Posterior cingulate gyrus (tissue), 11 donors: ENCODE measurements at regions of chr9 and their contacts with region 1.

Region 1: GRCh38 chr9:116646661-116647512 is 40.2 kb upstream of the TRIM32 start:
- DNase-seq: no peak

Region 2: DNA sequence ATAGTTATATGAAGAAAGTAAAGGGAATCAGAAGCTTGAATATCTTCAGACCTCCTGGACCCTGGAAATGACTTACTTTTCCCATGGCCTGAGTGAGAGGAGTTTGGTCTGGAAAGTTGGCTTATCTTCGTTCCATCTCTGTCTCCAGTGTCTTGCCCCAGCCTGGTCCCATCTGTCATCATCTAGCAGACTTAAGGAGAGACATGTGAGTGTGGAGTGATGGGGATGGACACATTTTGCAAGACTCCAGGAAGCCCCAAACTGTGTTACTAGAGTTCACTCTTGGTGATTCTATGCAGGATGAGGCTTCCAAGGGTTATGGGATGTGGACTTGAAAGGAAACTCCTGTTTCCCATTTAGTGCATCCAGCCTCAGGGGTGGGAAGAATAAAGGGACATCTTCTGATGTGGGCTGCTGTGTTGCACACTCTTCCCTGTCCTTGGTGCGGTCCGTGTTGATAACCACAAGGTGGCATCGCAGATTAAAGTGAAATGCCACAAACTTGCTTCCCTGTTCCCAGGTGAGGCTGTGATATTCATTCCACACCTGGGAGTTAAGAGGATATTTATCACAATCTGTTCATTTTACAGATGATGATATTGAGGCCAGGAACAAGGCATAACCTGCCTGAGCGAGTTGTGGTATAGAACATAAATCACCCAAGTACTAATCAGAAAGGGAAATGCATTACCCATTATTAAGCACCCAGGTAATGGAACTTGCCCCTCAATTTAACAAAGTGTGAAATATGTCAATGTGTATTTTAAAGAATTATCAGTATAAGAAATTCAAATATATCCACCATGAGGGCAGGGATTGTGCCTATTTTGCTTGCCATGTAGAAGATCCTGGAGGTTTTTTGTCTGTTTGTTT is 763.2 kb before region 1 on chr9:
- intact Hi-C with region 1: loop called (anchors 10 kb)
- DNase-seq: peak in 4 of 10 donors; percentile 12 to 64 (median 24)

Region 3: GRCh38 chr9:116149844-116150243 is 497.0 kb before region 1 on chr9:
- intact Hi-C with region 1: loop called (anchors 5 kb)
- DNase-seq: no peak

Region 4: GRCh38 chr9:116572095-116572748 is 74.7 kb before region 1 on chr9:
- intact Hi-C with region 1: loop called (anchors 10 kb)
- DNase-seq: peak; percentile 61 to 95 (median 76)